IMR-90 (cell line): ENCODE measurements at regions of chr6 and their contacts with region 1.

Region 1: DNA sequence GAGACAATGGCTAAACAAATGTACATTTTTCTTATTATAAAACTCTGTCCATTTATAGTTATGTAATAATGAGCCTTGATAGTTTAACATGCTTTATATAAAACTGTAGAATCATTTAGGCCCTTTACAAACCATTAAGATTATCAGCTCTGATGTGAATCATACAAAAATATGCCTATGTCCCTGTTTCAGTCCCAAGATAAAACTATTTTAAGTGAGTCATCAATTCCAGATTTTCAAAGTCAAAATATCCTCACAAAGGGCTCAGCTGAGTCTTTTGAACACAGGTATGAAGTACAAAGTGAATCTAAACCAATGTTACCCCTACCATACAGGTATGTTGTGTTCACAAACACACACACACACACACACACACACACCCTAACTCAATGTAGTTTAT is 88.0 kb downstream of the PTPRK start:
- DNase-seq: peak; percentile 74
- ATAC-seq: peak; percentile 74
- H3K4me3 ChIP-seq: no peak overlapping the region
- H3K27ac ChIP-seq: no peak overlapping the region
- H3K4me1 ChIP-seq: 0 out of 2 replicates have a peak, but pooled peaks cover 2% of the 10 kb centered on the region
- H3K27me3 ChIP-seq: no peaks in the 10 kb centered on the region
- CTCF ChIP-seq: no peak
- POLR2A ChIP-seq: no peak
- RAD21 ChIP-seq: no peak

Region 2: DNA sequence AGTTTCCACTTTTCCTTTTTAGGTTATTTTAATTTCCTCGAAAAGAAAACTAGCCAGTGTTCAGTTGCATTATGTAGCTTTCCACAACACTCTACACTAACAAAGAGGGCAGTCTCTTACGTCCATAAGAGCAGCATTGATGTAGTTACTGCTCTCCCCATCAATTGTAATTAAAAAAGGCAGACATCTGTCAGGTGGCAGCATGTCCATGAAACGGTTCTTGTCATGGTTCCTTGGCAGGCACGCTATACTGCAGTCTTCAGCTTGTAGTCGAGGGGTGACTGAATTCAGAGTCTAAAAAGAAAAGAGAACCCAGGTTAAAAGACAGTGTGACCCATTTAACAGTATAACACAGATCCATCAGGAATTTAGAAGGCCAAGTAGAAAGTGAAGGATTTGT is 451.4 kb before region 1 on chr6:
- CTCF ChIA-PET with region 1: no interaction called
- POLR2A ChIA-PET with region 1: no interaction called
- dilution Hi-C with region 1: no loop called
- in situ Hi-C with region 1: no loop called
- intact Hi-C with region 1: no loop called
- DNase-seq: no peak
- ATAC-seq: no peak
- H3K4me3 ChIP-seq: no peak overlapping the region
- H3K27ac ChIP-seq: no peak overlapping the region
- H3K4me1 ChIP-seq: no peaks in the 10 kb centered on the region
- H3K27me3 ChIP-seq: no peaks in the 10 kb centered on the region
- CTCF ChIP-seq: no peak
- POLR2A ChIP-seq: no peak
- RAD21 ChIP-seq: no peak

Region 3: GRCh38 chr6:128305228-128305627 is 127.2 kb before region 1 on chr6:
- CTCF ChIA-PET with region 1: no interaction called
- POLR2A ChIA-PET with region 1: no interaction called
- dilution Hi-C with region 1: no loop called
- in situ Hi-C with region 1: no loop called
- intact Hi-C with region 1: no loop called
- DNase-seq: peak; percentile 72
- ATAC-seq: peak; percentile 54; the same call in 1 of the 2 replicates
- H3K4me3 ChIP-seq: no peak overlapping the region
- H3K27ac ChIP-seq: no peak overlapping the region
- H3K4me1 ChIP-seq: peaks cover 2% of the 10 kb centered on the region
- H3K27me3 ChIP-seq: no peaks in the 10 kb centered on the region
- CTCF ChIP-seq: no peak
- POLR2A ChIP-seq: no peak
- RAD21 ChIP-seq: no peak

Region 4: GRCh38 chr6:128443553-128443952 is 11.2 kb after region 1 on chr6:
- CTCF ChIA-PET with region 1: no interaction called
- POLR2A ChIA-PET with region 1: interaction called, 11 read pairs
- dilution Hi-C with region 1: no loop called
- in situ Hi-C with region 1: no loop called
- intact Hi-C with region 1: no loop called
- DNase-seq: peak; percentile 43
- ATAC-seq: no peak
- H3K4me3 ChIP-seq: no peak overlapping the region
- H3K27ac ChIP-seq: no peak overlapping the region
- H3K4me1 ChIP-seq: no peaks in the 10 kb centered on the region
- H3K27me3 ChIP-seq: no peaks in the 10 kb centered on the region
- CTCF ChIP-seq: no peak
- POLR2A ChIP-seq: no peak
- RAD21 ChIP-seq: no peak

Region 5: GRCh38 chr6:128491610-128492206 is 59.3 kb after region 1 on chr6:
- CTCF ChIA-PET with region 1: no interaction called
- POLR2A ChIA-PET with region 1: no interaction called
- dilution Hi-C with region 1: no loop called
- in situ Hi-C with region 1: no loop called
- intact Hi-C with region 1: loop called (anchors 5 kb)
- DNase-seq: peak; percentile 65
- ATAC-seq: peak; percentile 56
- H3K4me3 ChIP-seq: peak overlapping the region; percentile 27; the same call in 1 of the 2 replicates
- H3K27ac ChIP-seq: peak overlapping the region; percentile 21; the same call in 1 of the 2 replicates
- H3K4me1 ChIP-seq: peaks cover 9% of the 10 kb centered on the region
- H3K27me3 ChIP-seq: no peaks in the 10 kb centered on the region
- CTCF ChIP-seq: no peak
- POLR2A ChIP-seq: no peak
- RAD21 ChIP-seq: no peak

Region 6: DNA sequence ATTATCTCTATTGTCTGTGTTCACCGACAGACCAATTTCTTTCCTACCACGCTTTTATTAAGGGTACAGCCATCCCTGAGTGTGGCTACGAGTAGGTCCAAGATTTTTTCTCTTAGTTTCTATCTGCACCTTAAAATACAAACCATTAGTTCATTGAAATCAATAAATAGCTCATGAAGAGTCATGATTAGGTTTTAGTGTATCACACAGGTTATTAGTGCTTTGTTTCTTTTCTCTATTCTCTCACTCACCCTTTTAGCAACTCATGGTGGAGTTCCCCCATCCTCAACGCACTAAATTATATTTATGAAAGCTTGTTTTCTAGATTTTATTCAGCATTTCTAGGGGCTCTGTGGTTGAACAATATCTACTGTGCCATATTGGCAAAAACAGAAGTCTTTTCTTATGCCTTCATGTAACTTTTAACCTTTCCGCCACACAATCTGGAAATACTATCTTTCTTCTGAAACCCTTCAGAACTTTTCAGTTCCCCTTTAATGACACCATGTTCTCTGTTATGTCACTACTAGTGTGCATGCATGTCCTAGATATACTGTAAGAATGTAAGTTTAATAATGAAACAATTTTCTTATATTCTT is 322.4 kb after region 1 on chr6:
- CTCF ChIA-PET with region 1: no interaction called
- POLR2A ChIA-PET with region 1: no interaction called
- dilution Hi-C with region 1: no loop called
- in situ Hi-C with region 1: no loop called
- intact Hi-C with region 1: no loop called
- DNase-seq: no peak
- ATAC-seq: no peak
- H3K4me3 ChIP-seq: no peak overlapping the region
- H3K27ac ChIP-seq: no peak overlapping the region
- H3K4me1 ChIP-seq: no peaks in the 10 kb centered on the region
- H3K27me3 ChIP-seq: no peaks in the 10 kb centered on the region; the same call in 1 of the 2 replicates
- CTCF ChIP-seq: no peak
- POLR2A ChIP-seq: no peak
- RAD21 ChIP-seq: no peak